Naive thymus-derived CD4-positive, alpha-beta T cell (primary cell): ENCODE measurements at regions of chr11 and their contacts with region 1.

Region 1: DNA sequence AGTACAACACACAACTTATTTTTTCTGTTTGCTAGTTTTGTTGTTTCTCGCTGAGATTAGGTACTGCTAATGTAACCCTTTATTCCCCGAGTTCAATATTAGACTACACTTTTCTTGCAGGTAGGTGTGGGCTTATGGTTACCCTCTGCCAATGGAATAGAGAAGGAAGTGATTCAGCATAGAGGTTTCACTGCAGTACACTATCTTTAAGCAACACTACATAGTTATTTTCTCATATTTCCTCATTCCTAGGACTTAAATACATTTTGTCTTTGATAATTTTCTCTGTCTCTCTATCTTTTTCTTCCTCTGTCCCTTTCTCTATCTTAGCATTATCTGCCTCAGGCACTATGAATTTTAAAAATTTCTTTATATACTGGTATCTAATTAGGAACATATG is 791.0 kb downstream of the FAM181B start:
- DNase-seq: no peak
- ATAC-seq: no peak
- H3K4me3 ChIP-seq: no peak overlapping the region
- H3K4me3 Mint-ChIP-seq: no peak overlapping the region
- H3K27ac ChIP-seq: no peak overlapping the region
- H3K27ac Mint-ChIP-seq: no peak overlapping the region
- H3K4me1 ChIP-seq: no peaks in the 10 kb centered on the region
- H3K4me1 Mint-ChIP-seq: no peaks in the 10 kb centered on the region
- H3K27me3 ChIP-seq: no peaks in the 10 kb centered on the region
- H3K27me3 Mint-ChIP-seq: no peaks in the 10 kb centered on the region

Region 2: DNA sequence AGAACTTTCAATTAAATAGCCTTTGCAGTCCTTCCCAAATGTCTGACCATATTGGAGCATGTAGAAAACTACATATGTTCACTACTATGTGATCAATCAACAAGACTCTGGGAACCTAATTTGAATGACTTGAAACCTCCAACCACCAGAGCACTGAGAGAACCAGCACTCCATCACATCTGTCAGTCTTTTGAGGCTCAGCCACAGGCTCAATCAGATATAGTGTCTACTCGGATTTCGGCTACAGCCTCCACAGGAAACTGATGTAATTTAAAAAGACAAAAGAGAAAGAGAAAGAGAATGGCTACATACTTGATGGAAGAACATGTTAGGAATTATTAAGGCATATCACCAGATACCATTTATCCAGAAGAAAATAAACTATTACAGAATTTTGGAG is 68.0 kb before region 1 on chr11:
- CTCF ChIA-PET with region 1: no interaction called
- POLR2A ChIA-PET with region 1: no interaction called
- intact Hi-C with region 1: loop called in 1 of 2 experiments (anchors 5 kb)
- DNase-seq: peak in 7 of 9 donors; percentile 10 to 45 (median 24)
- ATAC-seq: peak; percentile 29
- H3K4me3 ChIP-seq: no peak overlapping the region
- H3K4me3 Mint-ChIP-seq: peak overlapping the region; percentile 29 to 76 (median 50)
- H3K27ac ChIP-seq: no peak overlapping the region
- H3K27ac Mint-ChIP-seq: peak overlapping the region in 6 of 9 donors; percentile 13 to 80 (median 23)
- H3K4me1 ChIP-seq: peaks cover 17 to 32% of the 10 kb centered on the region in 2 donors
- H3K4me1 Mint-ChIP-seq: peaks cover 27 to 53% (median 47%) of the 10 kb centered on the region in 7 donors
- H3K27me3 ChIP-seq: no peaks in the 10 kb centered on the region
- H3K27me3 Mint-ChIP-seq: peaks cover 0 to 35% (median 0%) of the 10 kb centered on the region in 5 donors

Region 3: DNA sequence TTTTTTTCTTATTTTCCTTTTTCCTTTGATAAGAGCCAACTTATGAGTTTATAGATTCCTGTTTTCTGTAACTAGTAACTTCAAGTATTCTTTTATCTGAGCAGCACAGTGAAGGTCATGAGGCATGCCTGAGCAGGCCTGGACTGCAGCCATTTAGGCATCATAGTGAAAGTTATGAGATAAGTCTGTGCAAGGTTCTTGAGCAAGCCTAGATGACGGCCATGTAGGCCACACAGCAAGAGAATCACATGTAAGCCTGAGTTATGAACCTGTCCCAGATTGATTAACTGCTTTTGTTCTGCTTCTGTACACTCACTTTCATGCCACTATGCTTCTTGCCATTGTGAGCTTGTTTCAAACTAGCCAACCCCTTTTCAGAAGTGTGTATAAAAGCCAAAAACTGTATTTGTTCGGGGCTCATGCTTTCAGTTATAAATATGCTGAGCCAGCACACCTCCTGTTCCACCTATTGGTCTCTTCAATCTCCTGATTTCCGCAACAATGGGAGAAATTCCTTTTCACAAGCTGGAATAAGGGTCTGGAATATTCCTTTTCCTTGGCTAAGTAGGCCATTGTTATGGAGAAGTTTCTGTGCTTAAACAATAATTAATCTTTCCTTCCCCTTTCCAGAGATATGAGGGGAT is 45.3 kb after region 1 on chr11:
- CTCF ChIA-PET with region 1: no interaction called
- POLR2A ChIA-PET with region 1: no interaction called
- intact Hi-C with region 1: no loop called
- DNase-seq: no peak
- ATAC-seq: no peak
- H3K4me3 ChIP-seq: no peak overlapping the region
- H3K4me3 Mint-ChIP-seq: no peak overlapping the region
- H3K27ac ChIP-seq: no peak overlapping the region
- H3K27ac Mint-ChIP-seq: no peak overlapping the region
- H3K4me1 ChIP-seq: no peaks in the 10 kb centered on the region
- H3K4me1 Mint-ChIP-seq: peaks cover 0 to 2% (median 0%) of the 10 kb centered on the region in 7 donors
- H3K27me3 ChIP-seq: no peaks in the 10 kb centered on the region
- H3K27me3 Mint-ChIP-seq: peaks cover 0 to 4% (median 0%) of the 10 kb centered on the region in 5 donors